ENCODE measurements at regions of chr5 and their contacts with region 1.

Region 1: GRCh38 chr5:62465985-62466925 is 53.7 kb downstream of the IPO11 start:
- DNase-seq: no peak
- ATAC-seq: no peak
- H3K4me3 ChIP-seq: no peak overlapping the region
- H3K4me3 Mint-ChIP-seq: no peak overlapping the region
- H3K27ac ChIP-seq: no peak overlapping the region
- H3K27ac Mint-ChIP-seq: peak overlapping the region; percentile 7
- H3K4me1 ChIP-seq: no peaks in the 10 kb centered on the region
- H3K4me1 Mint-ChIP-seq: peaks cover 2% of the 10 kb centered on the region
- H3K27me3 ChIP-seq: no peaks in the 10 kb centered on the region
- H3K27me3 Mint-ChIP-seq: no peaks in the 10 kb centered on the region
- CTCF ChIP-seq: no peak

Region 2: GRCh38 chr5:63911871-63912270 is 1445.6 kb after region 1 on chr5:
- CTCF ChIA-PET with region 1: no interaction called
- POLR2A ChIA-PET with region 1: no interaction called
- intact Hi-C with region 1: loop called in 1 of 2 experiments (anchors 5 kb)
- DNase-seq: no peak
- ATAC-seq: no peak
- H3K4me3 ChIP-seq: no peak overlapping the region
- H3K4me3 Mint-ChIP-seq: no peak overlapping the region
- H3K27ac ChIP-seq: no peak overlapping the region
- H3K27ac Mint-ChIP-seq: no peak overlapping the region
- H3K4me1 ChIP-seq: no peaks in the 10 kb centered on the region
- H3K4me1 Mint-ChIP-seq: no peaks in the 10 kb centered on the region
- H3K27me3 ChIP-seq: no peaks in the 10 kb centered on the region
- H3K27me3 Mint-ChIP-seq: no peaks in the 10 kb centered on the region
- CTCF ChIP-seq: no peak